CD8-positive, alpha-beta T cell (primary cell): ENCODE measurements at regions of chr12 and their contacts with region 1.

Region 1: DNA sequence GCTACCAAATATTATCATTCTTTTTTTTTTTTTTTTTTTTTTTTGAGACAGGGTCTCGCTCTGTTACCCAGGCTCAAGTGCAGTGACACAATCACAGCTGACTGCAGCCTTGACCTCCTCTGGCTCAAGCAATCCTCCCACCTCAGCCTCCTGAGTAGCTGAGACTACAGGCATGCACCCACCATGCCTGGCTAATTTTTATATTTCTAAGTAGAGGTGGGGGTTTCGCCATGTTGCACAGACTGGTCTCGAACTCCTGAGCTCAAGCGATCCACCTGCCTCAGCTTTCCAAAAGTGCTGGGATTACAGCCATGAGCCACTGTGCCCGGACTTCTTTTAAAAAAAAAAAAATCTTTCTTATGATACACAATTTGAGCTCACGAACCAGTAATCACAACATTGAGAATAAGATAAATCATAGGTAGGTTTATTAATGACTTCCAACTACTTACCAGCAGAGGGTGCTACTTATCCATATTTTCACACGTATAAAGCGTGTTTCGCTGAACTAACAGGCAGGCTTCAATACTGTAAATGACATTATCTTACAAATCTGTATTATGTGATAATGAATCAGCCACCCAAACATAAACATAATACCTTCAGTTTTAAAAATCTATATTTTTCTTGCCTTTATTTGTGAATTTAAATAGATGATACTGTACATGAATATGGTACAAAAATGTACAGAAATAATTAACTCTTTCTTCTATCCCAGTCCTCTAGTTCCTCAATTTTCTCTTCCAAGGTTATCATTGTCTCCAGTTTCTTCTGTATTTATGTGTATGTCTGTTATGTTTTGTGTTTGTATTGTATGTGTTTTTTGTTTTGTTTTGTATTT is 42.5 kb upstream of the BCAT1 start:
- DNase-seq: peak in 3 of 9 experiments; percentile 15 to 82 (median 76)
- ATAC-seq: peak; percentile 91
- H3K4me3 ChIP-seq: no peak overlapping the region
- H3K4me3 Mint-ChIP-seq: no peak overlapping the region
- H3K27ac ChIP-seq: no peak overlapping the region
- H3K27ac Mint-ChIP-seq: no peak overlapping the region
- H3K4me1 ChIP-seq: no peaks in the 10 kb centered on the region
- H3K4me1 Mint-ChIP-seq: no peaks in the 10 kb centered on the region
- H3K27me3 ChIP-seq: no peaks in the 10 kb centered on the region
- H3K27me3 Mint-ChIP-seq: no peaks in the 10 kb centered on the region
- CTCF ChIP-seq: peak; percentile 84

Region 2: DNA sequence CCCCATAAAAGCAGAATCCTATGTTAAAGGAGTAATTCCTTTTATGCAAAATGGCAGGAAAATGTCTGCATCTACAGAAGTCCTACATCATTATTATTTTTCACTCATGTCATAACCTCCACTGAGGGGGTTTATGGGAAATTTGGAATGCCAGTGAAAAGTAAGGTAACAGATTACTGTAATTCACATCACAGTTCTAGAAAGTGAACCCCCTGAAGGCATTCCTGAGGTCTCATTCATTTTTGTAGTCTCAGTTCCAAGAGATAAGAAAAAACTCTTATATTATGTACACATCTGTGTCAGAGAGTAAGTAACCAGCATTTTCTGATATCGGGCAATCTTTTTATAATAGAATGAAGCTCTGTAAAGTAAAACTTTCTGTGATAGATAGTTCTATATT is 13.7 kb before region 1 on chr12:
- CTCF ChIA-PET with region 1: interaction called, 14 read pairs
- POLR2A ChIA-PET with region 1: no interaction called
- intact Hi-C with region 1: no loop called
- DNase-seq: no peak
- ATAC-seq: no peak
- H3K4me3 ChIP-seq: no peak overlapping the region
- H3K4me3 Mint-ChIP-seq: no peak overlapping the region
- H3K27ac ChIP-seq: no peak overlapping the region
- H3K27ac Mint-ChIP-seq: no peak overlapping the region
- H3K4me1 ChIP-seq: no peaks in the 10 kb centered on the region
- H3K4me1 Mint-ChIP-seq: no peaks in the 10 kb centered on the region
- H3K27me3 ChIP-seq: no peaks in the 10 kb centered on the region
- H3K27me3 Mint-ChIP-seq: peaks cover 5% of the 10 kb centered on the region
- CTCF ChIP-seq: no peak

Region 3: GRCh38 chr12:25119020-25119419 is 127.6 kb after region 1 on chr12:
- CTCF ChIA-PET with region 1: interaction called, 12 read pairs
- POLR2A ChIA-PET with region 1: no interaction called
- intact Hi-C with region 1: no loop called
- DNase-seq: no peak
- ATAC-seq: no peak
- H3K4me3 ChIP-seq: no peak overlapping the region
- H3K4me3 Mint-ChIP-seq: no peak overlapping the region
- H3K27ac ChIP-seq: no peak overlapping the region
- H3K27ac Mint-ChIP-seq: no peak overlapping the region
- H3K4me1 ChIP-seq: no peaks in the 10 kb centered on the region
- H3K4me1 Mint-ChIP-seq: no peaks in the 10 kb centered on the region
- H3K27me3 ChIP-seq: peaks cover 0 to 3% of the 10 kb centered on the region in 2 experiments
- H3K27me3 Mint-ChIP-seq: no peaks in the 10 kb centered on the region
- CTCF ChIP-seq: no peak

Region 4: DNA sequence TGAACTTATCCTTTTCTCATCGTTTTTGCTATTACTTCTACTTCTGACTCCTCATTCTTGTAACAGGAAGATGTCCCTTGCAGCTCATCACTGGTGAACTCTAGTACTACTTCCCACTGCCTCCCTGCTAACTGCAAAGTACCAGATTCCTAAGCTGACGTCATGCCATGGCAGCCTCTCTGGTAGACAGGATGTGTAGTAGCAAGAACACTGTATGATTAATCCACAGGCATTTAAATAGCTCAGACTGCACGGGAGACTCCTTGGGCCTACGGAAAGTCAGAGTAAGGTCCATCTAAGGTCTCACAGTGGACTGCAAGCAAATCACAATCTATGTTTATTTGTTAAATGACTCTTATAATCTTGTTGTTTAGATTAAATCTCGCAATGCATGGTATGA is 160.0 kb after region 1 on chr12:
- CTCF ChIA-PET with region 1: interaction called, 24 read pairs
- POLR2A ChIA-PET with region 1: no interaction called
- intact Hi-C with region 1: loop called (anchors 1 kb)
- DNase-seq: no peak
- ATAC-seq: no peak
- H3K4me3 ChIP-seq: no peak overlapping the region
- H3K4me3 Mint-ChIP-seq: no peak overlapping the region
- H3K27ac ChIP-seq: no peak overlapping the region
- H3K27ac Mint-ChIP-seq: no peak overlapping the region
- H3K4me1 ChIP-seq: peaks cover 4% of the 10 kb centered on the region
- H3K4me1 Mint-ChIP-seq: peaks cover 5% of the 10 kb centered on the region
- H3K27me3 ChIP-seq: no peaks in the 10 kb centered on the region
- H3K27me3 Mint-ChIP-seq: no peaks in the 10 kb centered on the region
- CTCF ChIP-seq: no peak